HepG2 (cell line): ENCODE measurements at regions of chr7 and their contacts with region 1.

Region 1: DNA sequence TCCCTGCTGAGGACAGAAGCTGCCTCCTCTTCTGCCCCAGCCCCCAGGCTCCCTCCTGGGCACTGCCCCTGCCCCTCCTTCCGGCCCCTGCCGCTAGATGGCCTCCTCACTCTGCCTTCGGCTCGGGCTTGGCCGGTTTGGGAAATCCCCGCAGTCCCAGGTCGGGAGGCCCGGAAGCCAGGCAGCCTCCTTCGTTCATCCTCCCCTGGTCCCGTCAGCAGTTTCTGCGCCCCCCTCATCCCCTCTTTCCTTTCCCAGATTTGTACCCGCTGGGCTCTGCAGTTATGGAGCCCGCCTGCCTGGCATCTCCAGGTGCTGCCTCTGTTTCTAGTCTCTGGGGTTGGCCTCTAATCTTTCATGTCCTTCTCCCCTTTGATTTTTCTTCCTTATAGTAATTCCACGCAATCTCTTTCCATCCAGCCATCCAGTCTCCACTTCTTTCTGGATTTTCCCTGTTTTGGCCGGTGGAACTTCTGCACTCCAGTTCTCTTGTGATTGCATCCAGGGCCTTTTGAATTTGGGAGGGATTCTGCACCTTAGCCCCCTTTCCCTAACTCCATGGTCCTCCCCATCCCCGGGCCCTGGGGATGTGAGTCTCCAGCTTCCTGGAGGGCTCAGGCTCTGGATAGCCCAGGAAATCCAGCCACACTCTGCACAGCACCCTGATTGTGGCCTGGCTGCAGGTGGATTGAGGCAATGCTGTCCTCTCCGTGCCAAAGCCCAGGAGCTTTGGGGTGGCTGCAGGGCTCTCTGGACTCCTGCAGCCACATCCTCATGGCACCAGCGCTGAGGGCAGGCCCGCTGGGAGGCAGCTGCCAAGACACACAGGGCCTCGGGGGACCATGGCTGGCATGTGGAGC is 3.3 kb upstream of the SHH start:
- DNase-seq: no peak
- ATAC-seq: peak; percentile 81
- H3K4me3 ChIP-seq: no peak overlapping the region
- H3K27ac ChIP-seq: no peak overlapping the region
- H3K4me1 ChIP-seq: peaks cover 37% of the 10 kb centered on the region
- H3K27me3 ChIP-seq: peaks cover 10 to 79% of the 10 kb centered on the region in 2 experiments; a peak in 4 of 5 replicates
- CTCF ChIP-seq: peak; percentile 94
- EP300 ChIP-seq: no peak
- POLR2A ChIP-seq: no peak
- RAD21 ChIP-seq: peak; percentile 92

Region 2: GRCh38 chr7:155283565-155284194 is 531.9 kb before region 1 on chr7:
- CTCF ChIA-PET with region 1: no interaction called
- POLR2A ChIA-PET with region 1: no interaction called
- in situ Hi-C with region 1: no loop called
- intact Hi-C with region 1: no loop called
- DNase-seq: no peak
- ATAC-seq: no peak
- H3K4me3 ChIP-seq: no peak overlapping the region
- H3K27ac ChIP-seq: no peak overlapping the region
- H3K4me1 ChIP-seq: no peaks in the 10 kb centered on the region
- H3K27me3 ChIP-seq: peaks cover 6 to 56% of the 10 kb centered on the region in 2 experiments; a peak in 4 of 5 replicates
- CTCF ChIP-seq: no peak
- EP300 ChIP-seq: no peak
- POLR2A ChIP-seq: no peak
- RAD21 ChIP-seq: no peak

Region 3: DNA sequence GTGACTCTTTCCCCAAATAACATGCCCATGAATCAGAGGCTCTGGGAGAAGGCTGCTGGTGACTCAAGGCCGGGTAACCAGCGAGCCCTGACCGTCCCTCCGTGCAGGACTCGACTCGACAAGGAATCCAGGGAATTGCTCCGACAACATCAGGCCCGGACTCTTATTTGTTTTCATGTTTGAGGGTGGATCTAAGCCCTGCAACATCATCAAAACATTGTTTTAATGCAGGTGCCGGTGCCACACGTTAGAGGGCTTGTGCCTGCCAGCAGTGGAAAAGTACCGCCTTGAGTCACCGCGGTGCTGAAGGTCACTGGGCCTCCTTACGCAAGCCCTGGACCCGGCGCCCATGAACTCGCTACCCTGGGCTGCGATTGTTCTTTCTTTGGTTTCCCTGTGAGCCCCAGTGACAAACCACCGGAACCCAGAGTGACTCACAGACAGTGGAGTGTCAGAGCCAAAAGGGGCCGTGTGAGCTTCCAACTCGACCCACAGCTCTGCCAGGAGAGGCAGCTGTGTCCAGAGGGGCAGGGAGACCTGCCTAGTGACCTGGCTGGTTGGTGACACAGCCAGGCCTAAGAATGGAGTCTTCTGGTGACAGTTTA is 136.1 kb after region 1 on chr7:
- CTCF ChIA-PET with region 1: no interaction called
- POLR2A ChIA-PET with region 1: interaction called, 5 read pairs
- in situ Hi-C with region 1: no loop called
- intact Hi-C with region 1: loop called (anchors 1 kb)
- DNase-seq: peak; percentile 97
- ATAC-seq: peak; percentile 89
- H3K4me3 ChIP-seq: peak overlapping the region; percentile 38 to 70 (median 47); a peak in 5 of 6 replicates
- H3K27ac ChIP-seq: peak overlapping the region; percentile 88
- H3K4me1 ChIP-seq: peaks cover 60% of the 10 kb centered on the region
- H3K27me3 ChIP-seq: 0 out of 5 replicates have a peak, but pooled peaks cover 0 to 10% of the 10 kb centered on the region in 2 experiments
- CTCF ChIP-seq: no peak; the same call in 1 of the 2 replicates
- EP300 ChIP-seq: peak; percentile 87 to 95
- POLR2A ChIP-seq: peak; percentile 80 to 92; a peak in 3 of 4 replicates
- RAD21 ChIP-seq: peak; percentile 9; the same call in 1 of the 2 replicates

Region 4: GRCh38 chr7:155961241-155962190 is 146.0 kb after region 1 on chr7:
- CTCF ChIA-PET with region 1: no interaction called
- POLR2A ChIA-PET with region 1: interaction called, 14 read pairs
- in situ Hi-C with region 1: loop called (anchors 10 kb)
- intact Hi-C with region 1: no loop called
- DNase-seq: peak; percentile 61
- ATAC-seq: peak; percentile 79
- H3K4me3 ChIP-seq: peak overlapping the region; percentile 72 to 84 (median 78)
- H3K27ac ChIP-seq: peak overlapping the region; percentile 66
- H3K4me1 ChIP-seq: peaks cover 45% of the 10 kb centered on the region
- H3K27me3 ChIP-seq: no peaks in the 10 kb centered on the region; a peak in 1 of 5 replicates
- CTCF ChIP-seq: no peak
- EP300 ChIP-seq: 0 out of 4 replicates have a peak, but pooled peaks of 1 of the 2 experiments have one; percentile 25
- POLR2A ChIP-seq: peak; percentile 50 to 65; a peak in 3 of 4 replicates
- RAD21 ChIP-seq: no peak

Region 5: DNA sequence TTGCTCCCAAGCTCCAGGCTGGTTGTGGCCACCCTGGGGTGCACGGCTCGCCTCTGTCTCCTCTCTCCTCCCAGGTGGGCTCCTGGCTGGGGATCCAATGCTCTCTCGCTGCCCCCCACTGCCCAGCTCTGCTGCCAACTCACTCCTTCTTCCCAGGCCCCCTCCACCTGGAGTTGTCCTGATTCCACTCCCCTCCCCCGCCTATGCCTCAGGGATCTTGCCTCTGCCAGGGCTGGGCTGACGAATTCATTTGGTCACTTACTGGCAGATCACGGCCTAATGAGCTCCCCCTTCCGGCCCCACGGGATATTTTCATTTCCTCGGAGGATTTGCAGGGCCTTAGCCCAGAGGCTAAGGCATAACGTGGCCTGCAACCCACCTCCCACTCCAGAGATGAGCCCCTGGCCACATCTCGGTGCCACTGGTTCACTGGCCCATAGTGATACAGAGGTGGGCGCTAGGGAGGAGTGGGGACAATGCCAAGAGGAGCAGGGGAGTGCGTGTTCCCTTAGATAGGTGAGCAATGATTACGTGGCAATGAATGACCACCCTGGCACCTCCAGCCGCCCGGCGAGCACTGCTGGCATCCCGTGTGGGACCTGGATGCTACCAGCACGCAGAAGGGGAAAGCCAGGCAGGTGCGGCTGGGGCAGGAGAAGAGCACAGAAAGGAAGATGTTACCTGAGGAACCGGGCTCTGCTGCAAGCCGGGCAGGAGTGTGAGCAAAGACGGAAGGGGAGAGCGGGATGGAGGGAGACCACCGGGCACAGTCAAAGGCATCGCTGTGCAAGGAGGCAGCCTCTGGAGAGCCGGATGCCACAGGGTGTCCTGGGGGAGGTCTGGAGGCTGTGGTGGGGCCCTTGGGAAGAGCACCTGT is 341.4 kb after region 1 on chr7:
- CTCF ChIA-PET with region 1: interaction called, 6 read pairs
- POLR2A ChIA-PET with region 1: no interaction called
- in situ Hi-C with region 1: loop called (anchors 5 kb)
- intact Hi-C with region 1: loop called (anchors 2 kb)
- DNase-seq: peak; percentile 20
- ATAC-seq: peak; percentile 89
- H3K4me3 ChIP-seq: no peak overlapping the region
- H3K27ac ChIP-seq: no peak overlapping the region
- H3K4me1 ChIP-seq: no peaks in the 10 kb centered on the region
- H3K27me3 ChIP-seq: peaks cover 2 to 30% of the 10 kb centered on the region in 2 experiments; a peak in 4 of 5 replicates
- CTCF ChIP-seq: peak; percentile 63
- EP300 ChIP-seq: no peak
- POLR2A ChIP-seq: no peak
- RAD21 ChIP-seq: peak; percentile 57; the same call in 1 of the 2 replicates

Region 6: GRCh38 chr7:156640257-156640948 is 824.8 kb after region 1 on chr7 and contains the start of gene RNF32:
- CTCF ChIA-PET with region 1: no interaction called
- POLR2A ChIA-PET with region 1: no interaction called
- in situ Hi-C with region 1: loop called (anchors 25 kb)
- intact Hi-C with region 1: no loop called
- DNase-seq: no peak
- ATAC-seq: no peak
- H3K4me3 ChIP-seq: no peak within 1 kb of the TSS
- H3K27ac ChIP-seq: no peak within 1 kb of the TSS
- H3K4me1 ChIP-seq: no peaks in the 10 kb centered on the region
- H3K27me3 ChIP-seq: no peaks in the 10 kb centered on the region
- CTCF ChIP-seq: no peak
- EP300 ChIP-seq: no peak
- POLR2A ChIP-seq: no peak
- RAD21 ChIP-seq: no peak
- total RNA-seq, gene RNF32: not detected in 2 replicates